ENCODE measurements at regions of chr13 and their contacts with region 1.

Region 1: GRCh38 chr13:98998831-98999638 is 21.2 kb upstream of the DOCK9 start:
- DNase-seq: peak; percentile 75
- H3K4me3 Mint-ChIP-seq: peak overlapping the region; percentile 44
- H3K27ac Mint-ChIP-seq: peak overlapping the region; percentile 56
- H3K4me1 Mint-ChIP-seq: peaks cover 81% of the 10 kb centered on the region
- H3K27me3 Mint-ChIP-seq: no peaks in the 10 kb centered on the region

Region 2: GRCh38 chr13:98246538-98247172 is 752.4 kb before region 1 on chr13:
- intact Hi-C with region 1: no loop called
- DNase-seq: no peak
- H3K4me3 Mint-ChIP-seq: no peak overlapping the region
- H3K27ac Mint-ChIP-seq: no peak overlapping the region
- H3K4me1 Mint-ChIP-seq: no peaks in the 10 kb centered on the region
- H3K27me3 Mint-ChIP-seq: peaks cover 8% of the 10 kb centered on the region

Region 3: DNA sequence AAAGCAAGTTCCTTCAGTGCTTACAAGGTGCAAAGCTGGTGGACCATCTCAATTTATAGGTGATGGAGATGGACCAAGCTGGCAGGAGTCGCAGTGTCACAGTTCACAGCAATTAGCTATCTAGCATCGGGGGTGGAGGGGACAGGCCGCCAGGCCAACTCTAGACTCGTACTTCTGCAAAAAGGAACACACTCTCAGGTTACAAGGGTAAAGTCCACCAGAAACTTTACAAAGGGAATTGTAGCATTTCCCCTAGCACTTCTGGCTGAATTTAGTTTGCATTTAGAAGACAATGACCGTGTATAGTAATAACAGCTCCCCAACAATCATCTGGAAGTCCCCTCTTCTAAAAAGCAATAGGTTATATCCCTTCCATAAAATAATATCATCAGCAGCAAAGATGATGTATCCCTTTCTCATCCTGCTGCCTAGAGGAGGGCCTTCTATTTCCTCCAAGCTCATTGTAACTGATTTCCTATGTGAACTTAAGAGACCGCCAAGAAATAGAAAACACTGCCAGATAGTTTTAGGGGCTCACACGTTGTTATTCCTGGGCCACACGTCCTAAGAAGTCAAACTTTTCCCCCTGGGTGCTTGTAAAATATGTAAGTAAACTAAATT is 12.7 kb before region 1 on chr13:
- intact Hi-C with region 1: loop called (anchors 1 kb)
- DNase-seq: no peak
- H3K4me3 Mint-ChIP-seq: no peak overlapping the region
- H3K27ac Mint-ChIP-seq: no peak overlapping the region
- H3K4me1 Mint-ChIP-seq: peaks cover 49% of the 10 kb centered on the region
- H3K27me3 Mint-ChIP-seq: no peaks in the 10 kb centered on the region

Region 4: DNA sequence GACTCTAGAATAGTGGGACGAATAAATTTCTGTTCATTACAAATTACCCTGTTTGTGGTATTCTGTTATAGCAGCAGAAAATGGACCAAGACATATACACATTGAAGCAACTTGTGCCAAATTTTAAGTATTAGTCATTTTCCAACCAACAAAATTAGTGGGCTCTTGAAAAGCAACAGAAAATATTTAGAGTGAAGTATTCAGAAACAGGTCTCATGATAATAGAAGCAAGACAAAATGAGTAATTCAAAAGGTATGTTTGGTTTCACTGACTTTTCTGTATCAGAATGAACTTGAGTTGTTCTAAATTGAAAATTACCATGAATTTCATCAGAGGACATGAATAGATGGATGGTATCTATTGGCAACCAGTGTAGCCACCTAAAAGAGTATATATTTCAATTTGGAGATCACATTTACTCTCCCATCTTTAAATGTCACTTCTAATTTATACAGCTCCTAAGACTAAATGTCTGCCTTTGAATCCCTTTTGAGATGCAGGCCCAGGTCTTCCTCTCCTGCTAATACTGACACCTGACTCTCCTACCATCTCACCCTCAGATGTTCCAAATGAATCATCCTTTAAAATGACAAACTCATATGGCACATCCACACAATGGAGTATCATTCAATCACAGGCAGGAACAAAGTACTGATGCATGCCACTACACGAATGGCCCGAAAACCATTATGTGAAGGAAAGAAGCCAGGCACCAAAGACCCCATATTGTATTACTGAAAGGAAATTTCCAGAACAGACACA is 19.6 kb after region 1 on chr13:
- intact Hi-C with region 1: loop called (anchors 2 kb)
- DNase-seq: no peak
- H3K4me3 Mint-ChIP-seq: no peak overlapping the region
- H3K27ac Mint-ChIP-seq: peak overlapping the region; percentile 61
- H3K4me1 Mint-ChIP-seq: peaks cover 26% of the 10 kb centered on the region
- H3K27me3 Mint-ChIP-seq: no peaks in the 10 kb centered on the region

Region 5: GRCh38 chr13:99046851-99047250 is 47.8 kb after region 1 on chr13:
- intact Hi-C with region 1: loop called (anchors 2 kb)
- DNase-seq: no peak
- H3K4me3 Mint-ChIP-seq: peak overlapping the region; percentile 73
- H3K27ac Mint-ChIP-seq: peak overlapping the region; percentile 90
- H3K4me1 Mint-ChIP-seq: peaks cover 79% of the 10 kb centered on the region
- H3K27me3 Mint-ChIP-seq: no peaks in the 10 kb centered on the region

Region 6: DNA sequence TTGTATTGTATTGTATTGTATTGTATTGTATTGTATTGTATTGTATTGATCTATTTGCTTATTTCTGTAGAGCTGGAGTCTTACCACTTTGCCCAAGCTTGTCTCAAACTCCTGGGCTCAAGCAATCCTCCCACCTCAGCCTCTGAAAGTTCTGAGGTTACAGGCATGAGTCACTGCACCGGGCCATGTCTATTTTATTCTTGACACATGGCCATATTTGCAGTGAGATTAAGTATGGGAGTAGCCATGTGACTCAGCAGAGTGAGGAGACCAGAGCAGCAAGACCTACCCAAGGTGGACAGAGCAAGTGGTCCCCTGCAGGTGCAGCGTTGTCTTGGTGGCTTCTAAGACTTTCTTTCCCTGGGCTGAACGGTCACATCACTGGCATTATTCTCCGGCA is 152.5 kb after region 1 on chr13:
- intact Hi-C with region 1: no loop called
- DNase-seq: no peak
- H3K4me3 Mint-ChIP-seq: no peak overlapping the region
- H3K27ac Mint-ChIP-seq: no peak overlapping the region
- H3K4me1 Mint-ChIP-seq: peaks cover 9% of the 10 kb centered on the region
- H3K27me3 Mint-ChIP-seq: no peaks in the 10 kb centered on the region

Region 7: GRCh38 chr13:99516153-99516929 is 517.3 kb after region 1 on chr13:
- intact Hi-C with region 1: no loop called
- DNase-seq: peak; percentile 52
- H3K4me3 Mint-ChIP-seq: no peak overlapping the region
- H3K27ac Mint-ChIP-seq: no peak overlapping the region
- H3K4me1 Mint-ChIP-seq: peaks cover 19% of the 10 kb centered on the region
- H3K27me3 Mint-ChIP-seq: no peaks in the 10 kb centered on the region

Measured in activated CD4-positive, alpha-beta T cell treated with anti-CD3 and anti-CD28 coated beads, Interleukin-2, amount 10 ng/mL, durations not matched to agents 24 days and 14 days (primary cell).